Heart right ventricle (tissue), 16 donors: ENCODE measurements at regions of chr4 and their contacts with region 1.

Region 1: GRCh38 chr4:89294573-89295269 is 12.9 kb downstream of the GPRIN3 start:
- DNase-seq: no peak
- ATAC-seq: peak in 1 of 8 donors; percentile 43
- H3K4me3 ChIP-seq: no peak overlapping the region
- H3K27ac ChIP-seq: peak overlapping the region in 5 of 10 donors; percentile 8 to 93 (median 37)
- H3K4me1 ChIP-seq: peaks cover 0 to 99% (median 62%) of the 10 kb centered on the region in 9 donors
- H3K27me3 ChIP-seq: no peaks in the 10 kb centered on the region
- CTCF ChIP-seq: no peak

Region 2: GRCh38 chr4:88953400-88953799 is 341.3 kb before region 1 on chr4:
- intact Hi-C with region 1: no loop called
- DNase-seq: no peak
- ATAC-seq: peak in 1 of 8 donors; percentile 31
- H3K4me3 ChIP-seq: no peak overlapping the region
- H3K27ac ChIP-seq: no peak overlapping the region
- H3K4me1 ChIP-seq: peaks cover 0 to 30% (median 6%) of the 10 kb centered on the region in 9 donors
- H3K27me3 ChIP-seq: no peaks in the 10 kb centered on the region
- CTCF ChIP-seq: no peak

Region 3: DNA sequence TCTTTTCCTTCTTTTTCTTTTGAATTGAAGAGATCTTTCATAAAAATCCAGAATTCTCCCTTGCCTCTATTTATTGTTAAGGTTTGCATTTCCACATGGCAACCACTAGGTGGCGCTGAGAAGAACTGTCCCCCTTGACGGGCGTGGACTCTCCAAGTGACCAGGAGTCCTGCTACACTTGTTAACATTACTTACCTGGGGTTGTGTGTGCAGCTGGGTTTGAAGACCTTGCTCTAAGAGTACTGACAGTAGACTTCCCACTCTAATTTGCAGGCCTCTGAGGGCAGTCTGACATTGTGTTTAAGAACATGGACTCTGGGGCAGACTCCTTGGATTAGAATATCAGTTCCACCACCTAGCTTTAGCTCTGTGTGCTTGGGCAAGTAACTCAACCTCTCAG is 39.9 kb before region 1 on chr4:
- intact Hi-C with region 1: loop called in 4 of 10 experiments (anchors 5 kb)
- DNase-seq: no peak
- ATAC-seq: peak in 4 of 8 donors; percentile 39 to 43 (median 41)
- H3K4me3 ChIP-seq: no peak overlapping the region
- H3K27ac ChIP-seq: peak overlapping the region in 1 of 10 donors; percentile 13
- H3K4me1 ChIP-seq: peaks cover 2 to 54% (median 25%) of the 10 kb centered on the region in 9 donors
- H3K27me3 ChIP-seq: no peaks in the 10 kb centered on the region
- CTCF ChIP-seq: peak; percentile 10 to 78 (median 66)

Region 4: GRCh38 chr4:89410687-89411086 is 116.0 kb after region 1 on chr4:
- intact Hi-C with region 1: no loop called
- DNase-seq: no peak
- ATAC-seq: peak in 1 of 8 donors; percentile 42
- H3K4me3 ChIP-seq: no peak overlapping the region
- H3K27ac ChIP-seq: peak overlapping the region in 3 of 10 donors; percentile 14 to 46 (median 42)
- H3K4me1 ChIP-seq: peaks cover 0 to 34% (median 14%) of the 10 kb centered on the region in 9 donors
- H3K27me3 ChIP-seq: no peaks in the 10 kb centered on the region
- CTCF ChIP-seq: no peak

Region 5: DNA sequence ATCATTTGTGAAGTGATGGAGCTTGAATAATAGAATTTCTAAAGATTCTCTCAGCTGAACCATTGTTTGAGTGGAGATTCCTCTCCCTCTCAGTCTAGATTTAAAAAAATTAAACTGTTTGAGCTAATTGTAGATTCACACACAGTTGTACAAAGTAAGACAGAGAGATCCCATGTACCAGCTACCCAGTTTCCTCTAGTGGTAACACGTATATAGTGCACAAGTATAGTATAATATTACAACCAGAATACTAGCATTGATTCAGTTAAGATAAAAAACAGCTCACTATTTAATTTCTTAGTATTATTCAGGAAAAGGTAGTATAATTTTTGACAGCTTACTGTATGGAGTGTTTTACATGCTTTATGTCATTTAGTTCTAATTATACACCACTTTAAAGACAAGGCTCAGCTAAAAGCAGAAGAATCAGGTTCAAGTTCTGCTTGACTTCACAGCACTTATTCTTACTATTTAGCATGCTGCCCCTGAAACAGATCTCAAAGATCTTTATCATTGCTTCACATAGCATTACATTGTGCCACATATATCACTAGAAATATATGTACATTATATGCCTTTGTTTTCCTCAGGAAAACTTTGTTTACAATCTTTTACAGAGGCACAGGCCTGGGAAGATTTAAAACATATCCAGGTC is 406.2 kb after region 1 on chr4:
- intact Hi-C with region 1: no loop called
- DNase-seq: no peak
- ATAC-seq: no peak
- H3K4me3 ChIP-seq: no peak overlapping the region
- H3K27ac ChIP-seq: no peak overlapping the region
- H3K4me1 ChIP-seq: no peaks in the 10 kb centered on the region
- H3K27me3 ChIP-seq: no peaks in the 10 kb centered on the region
- CTCF ChIP-seq: no peak

Region 6: GRCh38 chr4:90187148-90187884 is 892.6 kb after region 1 on chr4:
- intact Hi-C with region 1: no loop called
- DNase-seq: no peak
- ATAC-seq: no peak
- H3K4me3 ChIP-seq: no peak overlapping the region
- H3K27ac ChIP-seq: no peak overlapping the region
- H3K4me1 ChIP-seq: peaks cover 0 to 39% (median 0%) of the 10 kb centered on the region in 9 donors
- H3K27me3 ChIP-seq: no peaks in the 10 kb centered on the region
- CTCF ChIP-seq: no peak